SK-N-SH (cell line): ENCODE measurements at regions of chr11 and their contacts with region 1.

Region 1: GRCh38 chr11:107689317-107690202 is 22.3 kb downstream of the SLN start:
- DNase-seq: peak; percentile 62
- H3K4me3 ChIP-seq: no peak overlapping the region; a peak in 1 of 4 replicates
- H3K27ac ChIP-seq: no peak overlapping the region
- H3K4me1 ChIP-seq: peaks cover 0 to 13% of the 10 kb centered on the region in 2 experiments; a peak in 3 of 4 replicates
- H3K27me3 ChIP-seq: no peaks in the 10 kb centered on the region
- CTCF ChIP-seq: peak; percentile 77
- EP300 ChIP-seq: no peak
- RAD21 ChIP-seq: peak; percentile 93

Region 2: GRCh38 chr11:107565219-107565937 is 124.2 kb before region 1 on chr11 and contains the start of gene ALKBH8:
- CTCF ChIA-PET with region 1: interaction called, 60 read pairs
- POLR2A ChIA-PET with region 1: no interaction called
- DNase-seq: peak; percentile 73
- H3K4me3 ChIP-seq: peak within 1 kb of the TSS; percentile 86 to 95
- H3K27ac ChIP-seq: peak within 1 kb of the TSS; percentile 73 to 87
- H3K4me1 ChIP-seq: peaks cover 31 to 46% of the 10 kb centered on the region in 2 experiments
- H3K27me3 ChIP-seq: no peaks in the 10 kb centered on the region
- CTCF ChIP-seq: no peak
- EP300 ChIP-seq: no peak
- RAD21 ChIP-seq: no peak
- polyA plus RNA-seq, gene ALKBH8: 2.4 and 3.5 TPM in 2 replicates

Region 3: DNA sequence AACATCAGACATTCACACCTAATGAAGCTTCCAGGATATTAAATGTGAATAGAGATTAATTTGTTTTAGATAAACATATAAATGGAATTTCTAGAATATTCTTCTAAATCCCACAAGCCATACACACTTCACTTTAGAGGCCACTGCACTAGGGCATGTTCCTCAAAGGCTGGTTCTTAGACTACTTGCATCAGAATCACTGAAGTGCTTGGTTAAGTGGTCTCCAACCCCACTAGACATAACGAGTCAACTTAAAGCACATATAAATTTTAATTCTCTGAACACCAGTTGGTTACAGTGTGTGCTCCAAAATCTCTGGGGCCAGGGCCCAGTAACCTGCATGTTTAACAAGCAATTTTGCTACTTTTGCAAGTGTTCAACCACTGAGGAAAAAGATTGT is 116.1 kb before region 1 on chr11:
- CTCF ChIA-PET with region 1: interaction called, 64 read pairs
- POLR2A ChIA-PET with region 1: no interaction called
- DNase-seq: no peak
- H3K4me3 ChIP-seq: no peak overlapping the region
- H3K27ac ChIP-seq: no peak overlapping the region
- H3K4me1 ChIP-seq: peaks cover 0 to under 1% of the 10 kb centered on the region in 2 experiments; a peak in 1 of 4 replicates
- H3K27me3 ChIP-seq: no peaks in the 10 kb centered on the region
- CTCF ChIP-seq: no peak
- EP300 ChIP-seq: no peak
- RAD21 ChIP-seq: no peak

Region 4: GRCh38 chr11:107619926-107620325 is 69.6 kb before region 1 on chr11:
- CTCF ChIA-PET with region 1: no interaction called
- POLR2A ChIA-PET with region 1: no interaction called
- DNase-seq: no peak
- H3K4me3 ChIP-seq: no peak overlapping the region
- H3K27ac ChIP-seq: no peak overlapping the region
- H3K4me1 ChIP-seq: no peaks in the 10 kb centered on the region
- H3K27me3 ChIP-seq: peaks cover 30% of the 10 kb centered on the region; the same call in 1 of the 2 replicates
- CTCF ChIP-seq: no peak
- EP300 ChIP-seq: no peak
- RAD21 ChIP-seq: no peak

Region 5: GRCh38 chr11:107676336-107677057 is 13.1 kb before region 1 on chr11:
- CTCF ChIA-PET with region 1: interaction called, 19 read pairs
- POLR2A ChIA-PET with region 1: no interaction called
- DNase-seq: no peak
- H3K4me3 ChIP-seq: no peak overlapping the region
- H3K27ac ChIP-seq: no peak overlapping the region
- H3K4me1 ChIP-seq: no peaks in the 10 kb centered on the region
- H3K27me3 ChIP-seq: peaks cover 12% of the 10 kb centered on the region; the same call in 1 of the 2 replicates
- CTCF ChIP-seq: no peak
- EP300 ChIP-seq: no peak
- RAD21 ChIP-seq: no peak

Region 6: DNA sequence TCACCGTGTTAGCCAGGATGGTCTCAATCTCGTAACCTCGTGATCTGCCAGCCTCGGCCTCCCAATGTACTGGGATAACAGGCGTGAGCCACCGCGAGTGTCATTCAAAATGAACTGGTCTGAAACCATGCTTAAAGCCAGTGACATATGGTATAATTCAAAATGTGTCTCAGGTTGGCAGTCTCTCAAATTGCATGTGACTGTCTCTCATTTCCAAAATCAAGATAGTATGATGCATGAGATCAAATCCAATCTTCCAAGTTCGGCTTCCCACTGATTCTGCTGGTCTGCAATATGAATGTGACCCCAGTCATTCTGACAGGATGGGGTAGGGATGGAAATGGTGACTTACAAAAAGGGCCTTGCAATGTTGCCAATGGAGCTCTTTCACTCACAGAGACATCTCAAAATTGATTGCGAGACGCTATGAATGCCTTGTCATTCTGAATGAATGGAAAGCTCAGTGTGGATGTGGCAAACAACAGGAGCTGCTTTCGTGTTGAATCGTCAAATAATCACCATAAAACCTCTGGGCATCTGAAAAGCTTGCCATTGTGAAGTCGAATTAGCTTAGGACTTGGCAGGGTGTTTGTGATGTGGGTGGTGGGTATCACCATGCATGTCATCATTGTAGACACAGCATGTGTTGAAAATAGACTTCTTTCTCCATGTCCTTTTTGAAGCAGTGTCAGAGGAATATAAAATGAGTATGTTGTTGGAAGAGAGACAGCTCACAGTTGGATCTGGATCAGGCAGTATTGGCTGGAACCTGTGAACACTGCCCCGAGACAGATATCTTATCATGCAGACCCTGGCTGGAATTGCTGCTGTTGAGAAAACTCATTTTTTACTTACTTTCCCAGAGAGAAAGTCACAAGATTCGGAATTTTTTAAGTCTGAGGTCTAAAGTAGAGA is 10.1 kb after region 1 on chr11:
- CTCF ChIA-PET with region 1: interaction called, 10 read pairs
- POLR2A ChIA-PET with region 1: no interaction called
- DNase-seq: no peak
- H3K4me3 ChIP-seq: no peak overlapping the region
- H3K27ac ChIP-seq: no peak overlapping the region
- H3K4me1 ChIP-seq: peaks cover 0 to 9% of the 10 kb centered on the region in 2 experiments; a peak in 1 of 4 replicates
- H3K27me3 ChIP-seq: no peaks in the 10 kb centered on the region
- CTCF ChIP-seq: no peak
- EP300 ChIP-seq: no peak
- RAD21 ChIP-seq: no peak